Body of pancreas (tissue), 4 donors: ENCODE measurements at regions of chr6 and their contacts with region 1.

Region 1: DNA sequence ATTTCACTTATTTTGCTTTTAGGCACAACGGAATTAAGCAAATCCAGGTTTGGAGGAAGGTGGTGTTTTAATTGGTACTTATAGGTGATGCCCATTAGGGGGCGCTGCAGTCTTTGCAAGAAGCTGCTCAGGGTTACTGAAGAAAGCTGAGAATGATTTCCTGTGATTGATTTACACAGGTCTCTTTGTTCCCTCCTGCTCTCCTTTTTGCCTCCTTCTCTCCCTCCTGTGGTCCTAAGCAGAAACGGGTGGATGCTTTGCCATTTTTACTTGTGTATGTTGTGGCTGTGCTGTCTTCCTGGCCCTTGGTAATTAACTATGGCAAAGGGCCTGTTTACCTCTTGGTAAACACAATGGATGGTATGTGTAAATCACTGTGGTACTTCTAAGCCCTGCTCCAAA is 97.8 kb downstream of the ANKS1A start:
- DNase-seq: peak; percentile 62 to 70 (median 65)
- ATAC-seq: peak; percentile 74
- H3K4me3 ChIP-seq: no peak overlapping the region
- H3K27ac ChIP-seq: no peak overlapping the region
- H3K4me1 ChIP-seq: no peaks in the 10 kb centered on the region
- H3K27me3 ChIP-seq: no peaks in the 10 kb centered on the region
- CTCF ChIP-seq: peak; percentile 46 to 81 (median 75)
- POLR2A ChIP-seq: no peak

Region 2: DNA sequence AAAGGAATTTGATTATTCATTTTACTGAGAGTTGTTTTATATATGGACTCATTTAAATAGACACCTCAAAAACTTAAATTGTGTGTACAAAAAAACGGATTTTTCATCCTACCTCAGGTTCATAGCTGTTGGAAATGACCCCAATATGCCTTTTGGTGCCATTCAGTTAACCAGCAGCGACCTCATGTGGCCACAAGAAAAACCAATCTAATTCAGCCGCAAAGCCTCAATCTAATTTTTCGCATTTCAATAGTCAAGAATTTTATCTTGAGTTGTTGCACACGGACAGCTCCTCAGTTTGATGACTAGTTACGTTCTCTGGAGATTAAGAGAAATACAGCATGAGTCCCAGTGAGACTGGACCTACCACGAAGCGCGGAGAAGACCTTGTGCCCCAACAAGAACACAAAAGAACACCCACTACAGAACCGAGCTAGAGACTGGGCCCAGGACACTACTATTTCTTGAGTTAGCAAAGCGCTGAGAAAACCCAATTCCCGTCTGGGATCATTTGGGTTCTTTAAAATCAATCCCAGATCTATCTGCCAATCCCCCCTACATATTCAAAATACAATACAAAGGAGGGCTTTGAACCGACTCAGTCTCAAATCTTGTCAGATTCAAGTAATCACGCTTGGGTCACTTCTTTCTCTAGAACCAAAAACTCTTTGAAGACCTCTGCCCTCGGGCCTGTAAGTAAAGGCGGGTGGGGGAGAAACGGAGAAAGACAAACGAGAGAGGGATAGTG is 153.2 kb after region 1 on chr6:
- intact Hi-C with region 1: loop called (anchors 5 kb)
- DNase-seq: peak; percentile 44 to 56 (median 48)
- ATAC-seq: no peak
- H3K4me3 ChIP-seq: no peak overlapping the region
- H3K27ac ChIP-seq: no peak overlapping the region
- H3K4me1 ChIP-seq: peaks cover 4% of the 10 kb centered on the region
- H3K27me3 ChIP-seq: peaks cover 0 to 8% of the 10 kb centered on the region in 2 donors
- CTCF ChIP-seq: peak; percentile 58 to 88 (median 82)
- POLR2A ChIP-seq: no peak

Region 3: GRCh38 chr6:35213824-35214756 is 227.2 kb after region 1 on chr6 and contains the start of gene SCUBE3:
- intact Hi-C with region 1: loop called (anchors 10 kb)
- DNase-seq: peak in 2 of 4 donors; percentile 20 to 23
- ATAC-seq: peak; percentile 51
- H3K4me3 ChIP-seq: peak within 1 kb of the TSS in 1 of 2 donors; percentile 8
- H3K27ac ChIP-seq: no peak within 1 kb of the TSS
- H3K4me1 ChIP-seq: peaks cover 17% of the 10 kb centered on the region
- H3K27me3 ChIP-seq: peaks cover 0 to 24% of the 10 kb centered on the region in 2 donors
- CTCF ChIP-seq: no peak
- POLR2A ChIP-seq: no peak
- total RNA-seq, gene SCUBE3: 0.33 TPM in 1 of 2 donors, not detected in the other

Region 4: DNA sequence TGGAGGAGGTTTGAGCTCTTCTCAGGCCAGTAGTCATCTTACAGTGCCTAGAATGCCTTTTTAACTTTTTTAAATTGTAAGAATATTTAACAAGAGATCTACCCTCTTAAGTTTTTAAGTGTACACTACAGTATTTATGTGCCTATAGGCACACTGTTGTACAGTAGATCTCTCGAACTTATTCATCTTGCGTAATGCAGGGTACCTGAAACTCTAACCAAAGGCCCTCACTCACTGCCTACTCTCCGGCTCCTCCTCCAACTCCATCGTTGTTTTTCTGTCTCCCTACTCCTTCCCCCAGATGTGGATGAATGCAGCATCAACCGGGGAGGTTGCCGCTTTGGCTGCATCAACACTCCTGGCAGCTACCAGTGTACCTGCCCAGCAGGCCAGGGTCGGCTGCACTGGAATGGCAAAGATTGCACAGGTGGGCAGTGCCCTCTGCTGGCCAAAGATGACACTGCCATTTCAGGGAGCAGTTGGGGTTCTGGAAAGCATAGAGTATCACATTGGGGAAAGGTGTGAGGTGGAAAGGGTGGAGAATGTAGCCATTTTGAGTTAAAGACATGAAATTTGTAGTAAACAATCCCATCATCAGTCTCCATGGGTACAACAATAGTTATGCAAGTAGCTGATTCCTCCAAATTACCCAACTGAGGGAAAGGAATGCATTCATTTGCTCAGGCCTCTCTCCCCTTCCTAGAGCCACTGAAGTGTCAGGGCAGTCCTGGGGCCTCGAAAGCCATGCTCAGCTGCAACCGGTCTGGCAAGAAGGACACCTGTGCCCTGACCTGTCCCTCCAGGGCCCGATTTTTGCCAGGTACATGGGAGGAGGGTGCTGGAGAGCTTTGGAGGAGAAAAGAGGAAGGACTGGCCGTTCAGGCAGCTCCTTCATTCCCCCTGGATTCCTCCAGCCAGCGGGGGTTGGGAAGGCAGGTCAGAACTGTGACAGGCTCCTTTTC is 254.3 kb after region 1 on chr6:
- intact Hi-C with region 1: no loop called
- DNase-seq: peak; percentile 70 to 85 (median 78)
- ATAC-seq: peak; percentile 87
- H3K4me3 ChIP-seq: no peak overlapping the region
- H3K27ac ChIP-seq: no peak overlapping the region
- H3K4me1 ChIP-seq: no peaks in the 10 kb centered on the region
- H3K27me3 ChIP-seq: no peaks in the 10 kb centered on the region
- CTCF ChIP-seq: peak; percentile 86 to 96 (median 91)
- POLR2A ChIP-seq: no peak

Region 5: DNA sequence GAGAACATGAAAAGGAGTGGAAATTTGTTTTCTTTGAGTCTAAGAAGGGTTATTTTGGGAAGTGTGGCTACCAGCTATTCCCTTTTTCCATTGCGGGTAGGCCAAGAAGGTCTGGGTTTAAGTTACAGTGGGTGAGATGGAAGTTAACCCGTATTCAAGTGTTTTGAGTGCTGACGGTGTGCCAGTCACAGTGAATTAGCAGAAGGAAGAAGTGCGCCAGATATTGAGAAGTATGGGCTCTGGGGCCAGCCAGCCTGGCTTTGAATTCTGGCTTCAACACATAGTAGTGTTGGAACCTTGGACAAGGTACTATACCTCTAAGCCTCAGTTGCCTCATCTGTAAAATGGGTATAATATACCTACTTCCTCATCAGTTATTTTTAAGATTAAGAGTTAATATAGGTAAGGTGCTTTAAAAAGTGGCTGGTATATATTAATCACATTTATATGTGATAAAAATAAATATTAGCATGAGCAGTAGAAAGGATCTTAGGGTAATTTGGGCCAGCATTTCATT is 289.0 kb after region 1 on chr6:
- intact Hi-C with region 1: no loop called
- DNase-seq: no peak
- ATAC-seq: no peak
- H3K4me3 ChIP-seq: no peak overlapping the region
- H3K27ac ChIP-seq: no peak overlapping the region
- H3K4me1 ChIP-seq: no peaks in the 10 kb centered on the region
- H3K27me3 ChIP-seq: no peaks in the 10 kb centered on the region
- CTCF ChIP-seq: no peak
- POLR2A ChIP-seq: no peak